Heart left ventricle (tissue), 16 donors: ENCODE measurements at regions of chr17 and their contacts with region 1.

Region 1: GRCh38 chr17:45719335-45720071 is 64.6 kb upstream of the CRHR1 start:
- DNase-seq: no peak
- ATAC-seq: peak in 2 of 4 donors; percentile 51 to 63
- H3K4me3 ChIP-seq: no peak overlapping the region
- H3K27ac ChIP-seq: no peak overlapping the region
- H3K4me1 ChIP-seq: no peaks in the 10 kb centered on the region
- H3K27me3 ChIP-seq: peaks cover 0 to 45% (median 11%) of the 10 kb centered on the region in 9 donors
- CTCF ChIP-seq: peak in 7 of 12 donors; percentile 7 to 31 (median 24)
- POLR2A ChIP-seq: no peak

Region 2: GRCh38 chr17:45666046-45666600 is 53.4 kb before region 1 on chr17:
- intact Hi-C with region 1: loop called in 1 of 10 experiments (anchors 10 kb)
- DNase-seq: no peak
- ATAC-seq: no peak
- H3K4me3 ChIP-seq: no peak overlapping the region
- H3K27ac ChIP-seq: no peak overlapping the region
- H3K4me1 ChIP-seq: no peaks in the 10 kb centered on the region
- H3K27me3 ChIP-seq: peaks cover 0 to 20% (median 2%) of the 10 kb centered on the region in 9 donors
- CTCF ChIP-seq: peak in 1 of 12 donors; percentile 7
- POLR2A ChIP-seq: no peak

Region 3: DNA sequence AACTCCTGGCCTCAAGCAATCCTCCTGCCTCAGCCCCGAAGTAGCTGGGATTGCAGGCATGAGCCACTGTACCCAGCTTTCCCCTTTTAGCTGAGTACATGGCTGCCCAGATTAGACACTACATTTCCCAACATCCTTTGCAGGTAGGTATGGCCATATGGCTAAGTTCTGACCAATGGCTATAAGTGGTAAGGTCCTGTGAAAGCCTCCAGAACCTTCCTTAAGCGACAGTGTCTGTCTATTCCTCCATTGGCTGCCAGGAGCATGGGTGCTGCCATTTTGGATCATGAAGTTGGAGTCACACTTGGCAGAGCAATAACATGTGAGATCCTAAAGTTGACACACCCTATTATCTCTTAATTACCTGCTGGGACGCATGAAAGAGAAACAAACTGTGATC is 40.3 kb after region 1 on chr17:
- intact Hi-C with region 1: no loop called
- DNase-seq: no peak
- ATAC-seq: no peak
- H3K4me3 ChIP-seq: no peak overlapping the region
- H3K27ac ChIP-seq: no peak overlapping the region
- H3K4me1 ChIP-seq: no peaks in the 10 kb centered on the region
- H3K27me3 ChIP-seq: peaks cover 0 to 51% (median 6%) of the 10 kb centered on the region in 9 donors
- CTCF ChIP-seq: no peak
- POLR2A ChIP-seq: no peak

Region 4: DNA sequence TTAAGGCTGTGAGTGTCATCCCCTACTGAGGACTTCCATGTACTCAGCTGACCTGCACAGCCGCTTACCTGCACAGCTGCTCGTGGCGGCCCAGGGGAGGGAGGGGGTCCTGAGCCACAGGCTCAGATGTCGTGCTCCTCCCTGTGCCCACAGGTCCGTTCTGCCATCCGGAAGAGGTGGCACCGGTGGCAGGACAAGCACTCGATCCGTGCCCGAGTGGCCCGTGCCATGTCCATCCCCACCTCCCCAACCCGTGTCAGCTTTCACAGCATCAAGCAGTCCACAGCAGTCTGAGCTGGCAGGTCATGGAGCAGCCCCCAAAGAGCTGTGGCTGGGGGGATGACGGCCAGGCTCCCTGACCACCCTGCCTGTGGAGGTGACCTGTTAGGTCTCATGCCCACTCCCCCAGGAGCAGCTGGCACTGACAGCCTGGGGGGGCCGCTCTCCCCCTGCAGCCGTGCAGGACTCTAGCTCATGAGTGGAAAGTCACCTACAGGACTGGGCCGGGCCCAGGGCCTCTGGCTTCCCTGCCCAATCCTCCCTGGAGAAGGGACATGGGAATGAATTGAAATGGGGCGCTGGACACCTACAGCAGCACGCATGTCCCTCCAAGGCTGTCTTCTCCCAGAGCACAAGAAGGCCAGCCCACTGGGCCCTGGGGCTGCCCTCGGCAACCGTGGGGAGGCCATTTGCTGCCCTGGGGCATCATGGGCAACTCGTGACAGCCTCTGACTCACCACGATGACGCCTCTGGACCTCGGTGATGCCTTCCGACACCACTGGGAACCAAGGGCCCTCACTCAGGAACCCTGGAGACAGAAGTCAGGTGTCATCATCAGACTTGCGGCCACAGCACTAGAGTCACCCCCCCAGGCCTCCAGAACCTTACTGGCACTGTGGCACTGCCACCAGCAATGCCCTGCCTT is 115.2 kb after region 1 on chr17:
- intact Hi-C with region 1: loop called in 3 of 10 experiments (anchors 2 to 5 kb)
- DNase-seq: peak in 1 of 5 donors; percentile 48
- ATAC-seq: no peak
- H3K4me3 ChIP-seq: no peak overlapping the region
- H3K27ac ChIP-seq: no peak overlapping the region
- H3K4me1 ChIP-seq: no peaks in the 10 kb centered on the region
- H3K27me3 ChIP-seq: peaks cover 0 to 34% (median 0%) of the 10 kb centered on the region in 9 donors
- CTCF ChIP-seq: no peak
- POLR2A ChIP-seq: no peak

Region 5: DNA sequence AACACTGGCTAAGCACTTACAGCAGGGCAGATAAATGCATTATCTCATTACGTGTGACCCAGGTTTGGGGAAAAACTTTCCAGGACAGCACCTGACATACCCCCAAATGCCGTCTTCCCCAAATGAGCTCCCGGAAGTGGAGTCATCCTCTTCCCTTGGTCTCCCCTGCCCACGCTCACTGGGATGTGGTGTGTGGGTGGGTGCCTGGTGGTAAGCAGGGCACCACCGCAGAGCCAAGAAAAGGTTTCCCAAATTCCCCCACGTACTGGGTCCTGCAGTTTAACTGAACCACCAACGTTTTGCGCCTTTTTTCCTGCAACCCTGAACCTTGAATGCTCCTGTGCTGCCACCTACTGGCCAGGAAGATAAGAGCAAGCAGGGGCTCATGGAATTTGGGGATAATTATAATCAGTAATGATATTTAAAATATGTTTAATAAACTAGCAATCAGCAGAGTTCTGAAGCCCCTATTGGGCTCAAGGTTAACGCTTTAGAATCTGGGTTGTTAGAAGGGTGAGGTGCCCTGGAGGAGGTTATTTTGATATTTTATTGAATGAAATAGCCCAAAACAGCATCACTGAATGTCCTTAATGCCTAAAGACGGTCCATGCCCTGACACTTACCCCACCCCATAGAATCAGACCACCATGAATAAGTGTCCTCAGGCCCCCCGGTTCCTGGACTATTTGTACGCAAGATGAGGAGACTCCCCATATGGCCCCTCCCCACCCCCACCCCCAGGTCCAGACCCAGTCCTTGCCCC is 133.2 kb after region 1 on chr17:
- intact Hi-C with region 1: loop called in 1 of 10 experiments (anchors 5 kb)
- DNase-seq: peak in 2 of 5 donors; percentile 40 to 48
- ATAC-seq: no peak
- H3K4me3 ChIP-seq: no peak overlapping the region
- H3K27ac ChIP-seq: no peak overlapping the region
- H3K4me1 ChIP-seq: peaks cover 0 to 3% (median 0%) of the 10 kb centered on the region in 12 donors
- H3K27me3 ChIP-seq: peaks cover 0 to 23% (median 0%) of the 10 kb centered on the region in 9 donors
- CTCF ChIP-seq: peak; percentile 79 to 91 (median 86)
- POLR2A ChIP-seq: no peak